Activated naive CD4-positive, alpha-beta T cell treated with anti-CD3 and anti-CD28 coated beads for 36 hours (primary cell): ENCODE measurements at regions of chr4 and their contacts with region 1.

Region 1: GRCh38 chr4:67545199-67546003 is at the start of gene CENPC:
- DNase-seq: peak; percentile 97
- H3K4me3 Mint-ChIP-seq: peak within 1 kb of the TSS; percentile 96
- H3K27ac Mint-ChIP-seq: peak within 1 kb of the TSS; percentile 99
- H3K4me1 Mint-ChIP-seq: peaks cover 38% of the 10 kb centered on the region
- H3K27me3 Mint-ChIP-seq: no peaks in the 10 kb centered on the region
- total RNA-seq, gene CENPC: 46.0 to 51.7 TPM

Region 2: DNA sequence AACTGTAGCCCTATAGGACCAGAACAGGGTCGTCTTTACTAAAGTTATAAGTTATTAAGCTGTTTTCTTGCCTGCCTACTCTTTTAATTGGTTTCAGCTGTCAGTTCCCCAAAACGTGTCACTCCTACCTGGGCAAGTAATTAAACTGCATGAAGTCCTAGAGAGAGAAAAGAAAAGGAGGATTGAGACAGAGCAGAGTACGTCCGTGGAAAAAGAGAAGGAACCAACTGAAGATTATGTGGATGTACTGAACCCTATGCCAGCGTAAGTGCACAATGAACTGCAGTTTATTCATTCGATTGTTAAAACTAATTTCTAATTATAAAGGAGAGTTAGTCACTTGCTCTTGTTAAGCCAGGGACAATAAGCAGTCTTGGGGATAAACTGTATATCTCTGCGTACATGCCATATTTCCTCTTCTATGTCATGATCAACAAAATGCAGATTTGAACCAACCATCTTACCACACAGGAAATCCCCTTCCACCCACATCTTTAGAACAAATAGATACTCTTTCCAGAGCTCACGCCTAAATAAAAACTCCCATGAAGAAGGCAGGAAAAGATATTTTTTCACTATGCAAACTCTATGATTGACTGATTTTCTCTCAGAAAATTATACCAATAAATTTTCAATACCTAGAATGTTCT is 35.9 kb after region 1 on chr4:
- CTCF ChIA-PET with region 1: interaction called, 5 read pairs
- intact Hi-C with region 1: loop called (anchors 1 kb)
- DNase-seq: peak; percentile 26
- H3K4me3 Mint-ChIP-seq: peak overlapping the region; percentile 57
- H3K27ac Mint-ChIP-seq: peak overlapping the region; percentile 89
- H3K4me1 Mint-ChIP-seq: peaks cover 43% of the 10 kb centered on the region
- H3K27me3 Mint-ChIP-seq: no peaks in the 10 kb centered on the region

Region 3: DNA sequence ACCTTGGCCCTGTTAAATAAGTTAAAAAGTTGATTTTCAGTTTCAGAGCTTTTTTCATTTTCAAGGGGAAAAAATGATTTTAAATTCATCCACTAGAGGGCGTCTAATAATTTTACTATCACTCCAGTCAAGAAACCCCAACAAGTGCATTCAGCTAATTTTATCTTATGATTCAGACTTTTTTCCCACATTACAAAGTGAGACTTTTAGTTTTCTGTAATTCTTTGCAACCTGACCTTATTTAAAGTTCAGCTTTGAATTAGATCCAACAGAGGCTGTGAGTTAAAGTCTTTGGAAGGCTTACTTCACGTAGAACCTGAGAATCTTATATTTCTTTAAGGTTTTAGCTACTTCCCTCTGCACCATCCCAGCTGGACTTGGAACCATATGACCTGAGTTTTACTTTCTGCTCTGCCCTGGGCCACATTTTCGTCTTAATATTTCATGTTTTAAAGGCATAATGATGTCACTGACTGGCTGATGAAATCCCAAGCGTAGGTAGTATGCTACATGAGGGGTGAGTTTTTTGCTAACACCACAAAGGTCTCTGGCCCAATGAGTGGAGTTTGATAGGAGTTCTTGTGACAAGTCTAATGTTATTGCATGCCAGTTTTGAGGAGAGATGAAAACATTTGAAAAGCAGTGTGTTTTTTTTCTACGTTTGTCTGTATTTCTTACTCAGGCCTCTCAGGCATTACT is 201.5 kb after region 1 on chr4:
- CTCF ChIA-PET with region 1: interaction called, 3 read pairs
- intact Hi-C with region 1: loop called (anchors 1 kb)
- DNase-seq: peak; percentile 5
- H3K4me3 Mint-ChIP-seq: peak overlapping the region; percentile 1
- H3K27ac Mint-ChIP-seq: peak overlapping the region; percentile 73
- H3K4me1 Mint-ChIP-seq: peaks cover 17% of the 10 kb centered on the region
- H3K27me3 Mint-ChIP-seq: no peaks in the 10 kb centered on the region

Region 4: DNA sequence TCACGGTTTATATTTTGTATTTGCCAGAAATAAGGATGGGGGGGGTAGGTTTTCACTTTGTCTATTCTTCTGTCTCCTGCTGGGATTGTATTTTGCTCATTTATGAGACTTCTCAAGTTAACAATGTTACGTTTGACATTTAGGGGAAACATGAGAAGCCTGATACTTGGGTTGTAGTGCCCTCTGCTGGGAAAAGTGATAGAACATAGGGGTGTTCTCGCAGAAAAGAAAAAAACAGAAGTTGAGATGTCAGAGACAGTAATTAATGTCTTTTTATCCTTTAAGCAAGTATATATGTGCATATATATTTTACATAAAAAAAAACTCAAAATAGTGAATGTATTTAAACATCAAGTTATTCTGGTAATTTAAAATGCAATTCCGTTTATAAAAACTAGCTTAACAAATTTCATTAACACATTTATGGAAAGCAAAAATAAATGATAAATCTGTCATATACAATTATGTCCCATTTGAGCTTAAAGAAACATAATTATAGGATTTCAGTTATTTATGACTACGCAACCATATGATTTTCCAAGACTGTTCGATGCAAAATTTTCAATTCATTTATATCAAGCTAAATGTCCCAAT is 630.3 kb after region 1 on chr4:
- CTCF ChIA-PET with region 1: no interaction called
- intact Hi-C with region 1: loop called (anchors 1 kb)
- DNase-seq: peak; percentile 75
- H3K4me3 Mint-ChIP-seq: no peak overlapping the region
- H3K27ac Mint-ChIP-seq: no peak overlapping the region
- H3K4me1 Mint-ChIP-seq: peaks cover 3% of the 10 kb centered on the region
- H3K27me3 Mint-ChIP-seq: peaks cover 21% of the 10 kb centered on the region

Region 5: DNA sequence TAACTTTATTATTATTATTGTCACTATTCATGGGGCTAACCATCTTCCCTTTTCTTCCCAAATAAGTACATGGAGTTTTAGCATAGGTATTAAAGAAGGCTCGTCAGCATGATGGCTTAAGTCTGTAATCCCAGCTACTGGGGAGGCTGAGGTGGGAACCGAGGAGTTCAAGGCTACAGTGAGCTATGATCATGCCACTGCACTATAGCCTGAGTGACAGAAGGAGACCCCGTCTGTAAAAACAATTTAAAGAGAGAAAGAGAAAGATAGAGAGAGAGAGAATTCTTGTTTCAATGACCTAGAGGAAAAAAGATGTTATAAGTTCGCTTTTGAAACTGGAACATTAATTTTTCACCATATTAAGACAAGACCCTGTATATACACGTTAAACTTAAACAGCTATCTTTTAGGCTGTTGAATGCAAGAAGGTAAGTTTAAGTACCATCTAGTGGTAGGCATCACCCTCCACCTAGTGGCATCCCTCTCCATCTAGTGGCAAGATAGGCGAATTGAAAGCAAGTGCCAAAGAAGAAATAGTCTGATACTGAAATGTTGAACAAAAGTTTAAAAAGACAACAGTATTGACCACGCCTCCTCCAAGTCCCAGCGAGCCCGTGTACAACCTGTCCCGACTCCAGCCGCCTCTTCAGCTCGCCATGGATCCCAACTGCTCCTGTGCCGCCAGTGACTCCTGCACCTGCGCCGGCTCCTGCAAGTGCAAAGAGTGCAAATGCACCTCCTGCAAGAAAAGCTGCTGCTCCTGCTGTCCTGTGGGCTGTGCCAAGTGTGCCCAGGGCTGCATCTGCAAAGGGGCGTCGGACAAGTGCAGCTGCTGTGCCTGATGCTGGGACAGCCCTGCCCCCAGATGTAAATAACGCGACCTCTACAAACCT is 830.5 kb after region 1 on chr4:
- CTCF ChIA-PET with region 1: no interaction called
- intact Hi-C with region 1: loop called (anchors 2 kb)
- DNase-seq: peak; percentile 64
- H3K4me3 Mint-ChIP-seq: peak overlapping the region; percentile 62
- H3K27ac Mint-ChIP-seq: no peak overlapping the region
- H3K4me1 Mint-ChIP-seq: peaks cover 12% of the 10 kb centered on the region
- H3K27me3 Mint-ChIP-seq: no peaks in the 10 kb centered on the region